ENCODE measurements at regions of chr13 and their contacts with region 1.

Region 1: DNA sequence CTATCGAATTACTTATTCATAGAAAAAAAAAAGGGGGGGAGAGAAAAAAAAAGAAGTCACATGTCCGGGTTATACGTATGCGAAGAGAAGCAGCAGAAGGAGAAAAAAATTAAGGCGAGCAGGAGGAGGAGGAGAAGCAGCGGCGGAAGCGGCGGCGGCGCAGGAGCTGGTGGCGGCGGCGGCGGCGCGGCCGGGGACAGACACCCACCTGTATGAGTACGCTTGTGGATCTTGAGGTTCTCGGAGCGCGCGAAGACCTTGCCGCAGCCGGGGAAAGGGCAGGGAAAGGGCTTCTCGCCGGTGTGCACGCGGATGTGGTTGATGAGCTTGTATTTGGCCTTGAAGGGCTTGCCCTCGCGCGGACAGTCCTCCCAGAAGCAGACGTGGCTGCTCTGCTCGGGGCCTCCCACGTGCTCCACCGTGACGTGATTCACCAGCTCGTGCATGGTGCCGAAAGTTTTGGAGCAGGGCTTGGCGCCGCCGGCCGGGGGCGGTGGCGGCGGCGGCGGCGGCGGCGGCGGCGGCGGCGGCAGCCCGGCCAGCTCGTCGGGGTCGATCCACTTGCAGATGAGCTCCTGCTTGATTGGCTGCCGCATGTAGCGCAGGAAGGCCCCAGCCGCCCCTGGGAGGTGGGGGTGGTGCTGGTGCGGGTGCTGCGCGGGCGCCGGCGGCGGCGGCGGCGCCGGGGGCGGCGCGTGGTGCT is 1.5 kb downstream of the ZIC5 start:
- DNase-seq: peak; percentile 76 to 91 (median 82)
- ATAC-seq: peak; percentile 77
- H3K4me3 ChIP-seq: peak overlapping the region; percentile 56
- H3K27ac ChIP-seq: peak overlapping the region; percentile 84
- H3K4me1 ChIP-seq: peaks cover 0 to 40% of the 10 kb centered on the region in 2 experiments; a peak in 3 of 5 replicates
- H3K27me3 ChIP-seq: no peaks in the 10 kb centered on the region
- CTCF ChIP-seq: 0 out of 6 replicates have a peak, but pooled peaks of 1 of the 3 experiments have one; percentile 1
- EP300 ChIP-seq: no peak
- POLR2A ChIP-seq: peak; percentile 46; the same call in 1 of the 2 replicates
- RAD21 ChIP-seq: no peak

Region 2: DNA sequence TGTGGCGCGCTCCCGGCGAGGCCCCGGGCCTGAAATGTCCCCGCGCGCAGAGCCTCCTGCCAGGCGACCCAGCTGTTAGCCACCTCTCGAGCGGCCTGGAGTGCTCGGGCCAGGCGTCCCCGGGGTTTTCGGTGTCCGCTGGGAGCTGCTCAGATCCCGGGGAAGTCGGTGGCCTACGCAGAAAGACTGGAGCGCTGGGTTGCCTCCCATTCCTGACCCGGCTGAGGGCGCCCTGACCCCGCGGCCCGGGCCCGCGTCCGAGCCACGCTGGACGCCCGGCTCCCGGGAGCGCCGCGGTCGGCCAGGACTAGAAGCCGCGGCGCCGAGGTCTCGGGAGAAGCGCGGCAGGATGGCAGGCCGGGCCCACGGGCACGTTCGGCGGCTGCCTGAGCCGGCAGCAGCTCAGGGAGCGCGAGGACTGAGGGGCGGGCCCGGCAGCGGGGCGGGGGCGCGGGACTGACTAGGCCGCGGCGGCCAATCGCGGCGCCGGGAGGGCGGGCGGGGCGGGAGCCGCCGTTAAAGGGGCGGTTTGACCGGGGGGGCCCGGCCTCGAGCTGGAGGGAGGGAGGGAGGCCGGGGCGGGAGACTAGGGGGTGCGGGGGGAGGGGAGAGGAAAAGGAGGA is 10.2 kb after region 1 on chr13:
- CTCF ChIA-PET with region 1: no interaction called
- POLR2A ChIA-PET with region 1: interaction called, 14 read pairs
- in situ Hi-C with region 1: no loop called
- intact Hi-C with region 1: no loop called
- DNase-seq: peak; percentile 83 to 90 (median 86)
- ATAC-seq: peak; percentile 79
- H3K4me3 ChIP-seq: peak overlapping the region; percentile 59
- H3K27ac ChIP-seq: peak overlapping the region; percentile 92
- H3K4me1 ChIP-seq: peaks cover 5 to 51% of the 10 kb centered on the region in 2 experiments; a peak in 3 of 5 replicates
- H3K27me3 ChIP-seq: no peaks in the 10 kb centered on the region
- CTCF ChIP-seq: peak in 1 of 3 experiments; percentile 23; a peak in 1 of 6 replicates
- EP300 ChIP-seq: no peak
- POLR2A ChIP-seq: peak; percentile 35; the same call in 1 of the 2 replicates
- RAD21 ChIP-seq: peak in 1 of 2 experiments; percentile 32; a peak in 1 of 4 replicates

Measured in K562 (cell line).